AG04450 (cell line): ENCODE measurements at regions of chr11 and their contacts with region 1.

Region 1: GRCh38 chr11:73307323-73308002 is 613 bp upstream of the ARHGEF17 start:
- DNase-seq: peak; percentile 98
- H3K4me3 ChIP-seq: peak overlapping the region; percentile 77
- H3K27ac ChIP-seq: peak overlapping the region; percentile 97
- H3K27me3 ChIP-seq: no peaks in the 10 kb centered on the region
- CTCF ChIP-seq: peak; percentile 85

Region 2: DNA sequence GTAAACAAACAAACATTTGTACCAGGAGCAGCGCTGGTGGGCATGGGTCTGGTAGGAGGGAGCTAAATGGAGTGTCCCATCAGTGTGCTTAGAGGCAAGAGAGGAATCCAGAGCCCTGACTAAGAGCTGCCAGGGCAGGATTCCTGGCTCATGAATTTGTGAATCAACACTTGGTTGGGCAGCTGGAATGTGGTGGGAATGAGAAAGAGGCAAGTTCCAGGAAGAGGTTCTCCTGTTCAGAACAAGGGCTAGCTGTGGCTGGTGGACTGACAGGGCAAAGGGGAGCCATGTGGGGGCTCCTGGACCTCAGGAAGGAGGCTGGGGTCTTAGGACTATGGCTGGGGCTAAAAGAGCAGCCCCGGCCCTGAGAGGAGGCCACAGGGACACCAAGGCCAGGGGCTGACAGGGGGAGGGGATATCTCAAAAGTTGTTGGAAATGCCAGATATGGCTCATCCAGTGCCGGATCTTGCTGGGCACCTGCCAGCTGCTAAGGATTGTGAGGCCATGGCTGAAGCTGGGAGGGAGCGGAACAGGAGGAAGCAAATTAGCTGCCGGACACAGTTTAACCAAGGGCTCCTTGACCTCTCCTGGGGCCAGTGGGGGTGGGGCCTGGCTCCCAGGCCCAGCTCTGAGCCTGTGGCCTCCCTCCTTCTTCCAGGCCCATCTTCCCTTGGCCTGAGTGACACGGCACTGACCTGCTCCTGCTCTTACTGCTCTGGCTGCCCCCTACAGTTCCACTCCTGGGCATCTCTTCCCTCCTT is 49.9 kb before region 1 on chr11:
- CTCF ChIA-PET with region 1: interaction called, 4 read pairs
- POLR2A ChIA-PET with region 1: interaction called, 10 read pairs
- DNase-seq: peak; percentile 73
- H3K4me3 ChIP-seq: no peak overlapping the region
- H3K27ac ChIP-seq: peak overlapping the region; percentile 98
- H3K27me3 ChIP-seq: no peaks in the 10 kb centered on the region
- CTCF ChIP-seq: no peak

Region 3: DNA sequence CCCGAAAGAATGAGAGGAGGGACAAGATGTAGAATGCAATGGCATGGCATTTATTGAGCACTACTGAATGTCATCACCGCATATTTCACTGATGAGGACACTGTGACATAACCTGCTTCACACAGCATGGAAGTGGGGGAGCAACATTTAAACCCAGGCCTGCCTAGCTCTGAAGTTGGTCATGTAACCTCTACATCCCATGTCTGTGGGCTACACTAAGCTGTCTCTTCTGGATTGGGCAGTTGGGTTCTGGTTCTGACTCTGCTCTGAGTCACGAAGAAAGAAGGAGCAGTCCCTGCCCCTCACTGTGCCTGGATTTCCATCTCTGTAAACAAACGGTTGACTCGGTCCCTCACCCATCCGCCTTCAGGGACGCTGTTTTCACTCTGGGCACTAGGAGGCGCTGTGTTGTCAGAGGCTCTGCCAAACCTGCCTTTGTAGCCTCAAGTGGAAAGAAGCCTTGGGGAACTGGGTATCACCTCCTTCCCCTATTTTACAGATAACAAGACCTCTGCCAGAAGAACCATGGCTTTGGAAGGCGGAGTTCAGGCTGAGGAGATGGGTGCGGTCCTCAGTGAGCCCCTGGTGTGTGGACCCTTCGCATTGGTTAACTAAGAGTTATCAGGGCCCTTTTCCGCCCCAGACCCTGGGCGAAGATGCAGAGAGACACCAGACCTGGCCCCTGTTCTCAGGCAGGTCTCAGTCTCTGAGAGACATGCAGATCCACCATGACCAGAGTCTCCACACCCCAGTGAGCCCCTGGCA is 12.1 kb before region 1 on chr11:
- CTCF ChIA-PET with region 1: interaction called, 35 read pairs
- POLR2A ChIA-PET with region 1: interaction called, 8 read pairs
- DNase-seq: no peak
- H3K4me3 ChIP-seq: no peak overlapping the region
- H3K27ac ChIP-seq: peak overlapping the region; percentile 54
- H3K27me3 ChIP-seq: no peaks in the 10 kb centered on the region
- CTCF ChIP-seq: peak; percentile 96

Region 4: GRCh38 chr11:73335204-73335923 is 27.9 kb after region 1 on chr11:
- CTCF ChIA-PET with region 1: interaction called, 137 read pairs
- POLR2A ChIA-PET with region 1: interaction called, 70 read pairs
- DNase-seq: no peak
- H3K4me3 ChIP-seq: peak overlapping the region; percentile 27; the same call in 1 of the 2 replicates
- H3K27ac ChIP-seq: peak overlapping the region; percentile 87
- H3K27me3 ChIP-seq: no peaks in the 10 kb centered on the region
- CTCF ChIP-seq: peak; percentile 98

Region 5: GRCh38 chr11:73350908-73351636 is 43.6 kb after region 1 on chr11:
- CTCF ChIA-PET with region 1: interaction called, 87 read pairs
- POLR2A ChIA-PET with region 1: interaction called, 3 read pairs
- DNase-seq: peak; percentile 57
- H3K4me3 ChIP-seq: no peak overlapping the region
- H3K27ac ChIP-seq: peak overlapping the region; percentile 57
- H3K27me3 ChIP-seq: no peaks in the 10 kb centered on the region
- CTCF ChIP-seq: peak; percentile 98

Region 6: DNA sequence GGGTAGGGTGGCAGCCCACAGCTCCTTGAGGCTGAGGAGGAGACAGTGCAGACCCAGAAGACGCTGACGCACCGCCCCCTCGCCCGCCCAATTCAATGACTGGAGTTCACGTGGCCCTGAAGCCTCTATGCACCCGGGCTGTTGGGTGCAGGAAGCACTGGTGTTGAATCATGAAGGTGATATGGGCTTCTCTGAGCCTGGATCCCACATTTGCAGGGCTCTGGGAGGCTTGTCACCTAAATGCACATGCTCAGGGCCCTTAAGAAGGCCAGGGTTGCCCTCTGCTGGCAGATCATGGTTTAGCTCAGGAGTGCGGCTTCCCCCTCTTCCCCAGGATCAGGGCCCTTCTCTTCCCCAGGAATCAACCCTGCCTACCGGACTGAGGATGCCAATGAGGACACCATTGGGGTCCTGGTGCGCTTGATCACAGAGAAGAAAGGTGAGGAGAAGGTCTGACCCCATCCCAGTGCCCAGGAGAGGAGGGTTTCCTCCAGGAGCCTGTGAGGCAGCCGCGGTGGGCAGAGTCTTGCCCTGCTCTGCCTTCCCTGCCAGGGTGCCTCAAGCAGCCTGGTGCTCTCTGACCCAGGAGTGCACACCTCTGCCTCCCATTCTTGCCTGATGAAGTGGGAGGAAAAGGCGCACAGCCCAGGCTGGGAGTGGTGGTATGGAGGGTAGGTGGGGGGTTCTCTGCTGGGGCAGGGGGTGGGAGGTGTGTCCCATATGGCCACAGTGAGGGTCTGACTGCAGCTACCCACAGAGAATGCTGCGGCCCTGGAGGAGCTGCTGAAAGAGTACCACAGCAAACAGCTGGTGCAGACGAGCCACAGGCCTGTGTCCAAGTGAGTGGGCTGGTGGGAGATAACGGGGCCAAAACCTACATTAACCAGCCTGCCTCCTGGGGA is 86.3 kb after region 1 on chr11:
- CTCF ChIA-PET with region 1: interaction called, 17 read pairs
- POLR2A ChIA-PET with region 1: no interaction called
- DNase-seq: peak; percentile 59
- H3K4me3 ChIP-seq: no peak overlapping the region
- H3K27ac ChIP-seq: peak overlapping the region; percentile 39
- H3K27me3 ChIP-seq: no peaks in the 10 kb centered on the region
- CTCF ChIP-seq: peak; percentile 91